A549 (cell line): ENCODE measurements at regions of chr13 and their contacts with region 1.

Region 1: GRCh38 chr13:95156208-95156607 is 145.0 kb downstream of the ABCC4 start:
- DNase-seq: peak in 1 of 2 experiments; percentile 41
- ATAC-seq: no peak
- H3K4me3 ChIP-seq: no peak overlapping the region
- H3K27ac ChIP-seq: peak overlapping the region; percentile 51 to 75
- H3K4me1 ChIP-seq: peaks cover 68% of the 10 kb centered on the region
- CTCF ChIP-seq: peak; percentile 65
- EP300 ChIP-seq: no peak
- POLR2A ChIP-seq: no peak
- RAD21 ChIP-seq: peak; percentile 75 to 77

Region 2: DNA sequence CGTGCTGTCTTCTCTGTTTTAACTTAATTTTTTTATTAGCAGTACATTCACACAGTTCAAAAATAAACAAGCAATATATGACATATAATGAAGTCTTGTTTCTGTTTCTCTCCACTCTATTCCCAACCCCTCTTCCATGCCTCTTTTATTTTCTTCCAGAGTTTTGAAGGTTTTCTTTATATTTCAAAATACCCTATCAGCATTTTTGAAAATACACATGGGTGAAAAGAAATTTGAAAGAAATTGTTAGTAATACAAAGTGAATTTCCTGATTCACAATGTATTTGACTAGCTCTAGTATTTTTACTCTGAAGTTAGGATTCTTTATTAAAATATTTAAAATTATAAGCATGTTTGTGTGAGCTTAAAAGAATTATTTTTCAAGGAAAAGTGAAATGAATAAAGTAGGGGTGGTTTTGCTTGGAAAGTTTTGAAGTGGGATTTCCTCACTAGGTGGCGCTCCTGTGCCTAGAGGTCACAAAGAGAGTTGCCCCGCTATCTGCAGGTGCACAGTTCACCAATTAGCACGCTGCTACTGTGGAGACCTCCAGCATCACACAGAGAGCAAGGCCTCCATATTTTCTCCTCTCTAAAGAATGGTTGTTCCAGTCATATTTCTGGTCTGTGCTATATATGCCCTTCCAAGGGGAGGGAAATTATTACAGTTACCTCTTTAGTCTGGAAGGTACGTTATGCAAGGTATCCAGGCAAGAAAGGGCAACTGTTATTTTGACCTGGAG is 481.4 kb before region 1 on chr13:
- CTCF ChIA-PET with region 1: interaction called, 31 read pairs
- POLR2A ChIA-PET with region 1: no interaction called
- DNase-seq: peak; percentile 37 to 66
- ATAC-seq: peak; percentile 68 to 82; a peak in 3 of 6 replicates
- H3K4me3 ChIP-seq: no peak overlapping the region
- H3K27ac ChIP-seq: no peak overlapping the region
- H3K4me1 ChIP-seq: no peaks in the 10 kb centered on the region
- CTCF ChIP-seq: peak; percentile 74
- EP300 ChIP-seq: no peak
- POLR2A ChIP-seq: no peak
- RAD21 ChIP-seq: peak; percentile 67

Region 3: GRCh38 chr13:94967183-94968039 is 188.8 kb before region 1 on chr13:
- CTCF ChIA-PET with region 1: interaction called, 21 read pairs
- POLR2A ChIA-PET with region 1: interaction called, 6 read pairs
- DNase-seq: peak; percentile 21 to 38
- ATAC-seq: peak; percentile 87 to 88
- H3K4me3 ChIP-seq: peak overlapping the region; percentile 52
- H3K27ac ChIP-seq: peak overlapping the region; percentile 85 to 98
- H3K4me1 ChIP-seq: peaks cover 10% of the 10 kb centered on the region
- CTCF ChIP-seq: no peak
- EP300 ChIP-seq: no peak
- POLR2A ChIP-seq: no peak
- RAD21 ChIP-seq: no peak

Region 4: GRCh38 chr13:95030821-95031343 is 125.3 kb before region 1 on chr13:
- CTCF ChIA-PET with region 1: interaction called, 10 read pairs
- POLR2A ChIA-PET with region 1: no interaction called
- DNase-seq: no peak
- ATAC-seq: no peak
- H3K4me3 ChIP-seq: no peak overlapping the region
- H3K27ac ChIP-seq: no peak overlapping the region
- H3K4me1 ChIP-seq: peaks cover 6% of the 10 kb centered on the region; the same call in 2 of the 3 replicates
- CTCF ChIP-seq: no peak
- EP300 ChIP-seq: no peak
- POLR2A ChIP-seq: no peak
- RAD21 ChIP-seq: no peak

Region 5: GRCh38 chr13:95113601-95114000 is 42.6 kb before region 1 on chr13:
- CTCF ChIA-PET with region 1: interaction called, 12 read pairs
- POLR2A ChIA-PET with region 1: no interaction called
- DNase-seq: no peak
- ATAC-seq: no peak
- H3K4me3 ChIP-seq: no peak overlapping the region
- H3K27ac ChIP-seq: peak overlapping the region in 1 of 2 experiments; percentile 70; a peak in 4 of 6 replicates
- H3K4me1 ChIP-seq: peaks cover 55% of the 10 kb centered on the region
- CTCF ChIP-seq: no peak
- EP300 ChIP-seq: no peak
- POLR2A ChIP-seq: no peak
- RAD21 ChIP-seq: no peak